Calu3 (cell line): ENCODE measurements at regions of chr7 and their contacts with region 1.

Region 1: GRCh38 chr7:90180011-90180585 is 25.8 kb downstream of the STEAP1 start:
- DNase-seq: no peak
- H3K4me3 Mint-ChIP-seq: no peak overlapping the region
- H3K27ac Mint-ChIP-seq: peak overlapping the region; percentile 95
- H3K4me1 Mint-ChIP-seq: peaks cover 18% of the 10 kb centered on the region
- H3K27me3 Mint-ChIP-seq: no peaks in the 10 kb centered on the region
- CTCF ChIP-seq: no peak

Region 2: GRCh38 chr7:89563597-89563996 is 616.5 kb before region 1 on chr7:
- CTCF ChIA-PET with region 1: no interaction called
- intact Hi-C with region 1: no loop called
- DNase-seq: no peak
- H3K4me3 Mint-ChIP-seq: no peak overlapping the region
- H3K27ac Mint-ChIP-seq: no peak overlapping the region
- H3K4me1 Mint-ChIP-seq: no peaks in the 10 kb centered on the region
- H3K27me3 Mint-ChIP-seq: no peaks in the 10 kb centered on the region
- CTCF ChIP-seq: no peak

Region 3: GRCh38 chr7:90236721-90237289 is 56.7 kb after region 1 on chr7:
- CTCF ChIA-PET with region 1: no interaction called
- intact Hi-C with region 1: loop called (anchors 2 kb)
- DNase-seq: no peak
- H3K4me3 Mint-ChIP-seq: peak overlapping the region; percentile 32
- H3K27ac Mint-ChIP-seq: peak overlapping the region; percentile 30
- H3K4me1 Mint-ChIP-seq: peaks cover 33% of the 10 kb centered on the region
- H3K27me3 Mint-ChIP-seq: no peaks in the 10 kb centered on the region
- CTCF ChIP-seq: no peak

Region 4: DNA sequence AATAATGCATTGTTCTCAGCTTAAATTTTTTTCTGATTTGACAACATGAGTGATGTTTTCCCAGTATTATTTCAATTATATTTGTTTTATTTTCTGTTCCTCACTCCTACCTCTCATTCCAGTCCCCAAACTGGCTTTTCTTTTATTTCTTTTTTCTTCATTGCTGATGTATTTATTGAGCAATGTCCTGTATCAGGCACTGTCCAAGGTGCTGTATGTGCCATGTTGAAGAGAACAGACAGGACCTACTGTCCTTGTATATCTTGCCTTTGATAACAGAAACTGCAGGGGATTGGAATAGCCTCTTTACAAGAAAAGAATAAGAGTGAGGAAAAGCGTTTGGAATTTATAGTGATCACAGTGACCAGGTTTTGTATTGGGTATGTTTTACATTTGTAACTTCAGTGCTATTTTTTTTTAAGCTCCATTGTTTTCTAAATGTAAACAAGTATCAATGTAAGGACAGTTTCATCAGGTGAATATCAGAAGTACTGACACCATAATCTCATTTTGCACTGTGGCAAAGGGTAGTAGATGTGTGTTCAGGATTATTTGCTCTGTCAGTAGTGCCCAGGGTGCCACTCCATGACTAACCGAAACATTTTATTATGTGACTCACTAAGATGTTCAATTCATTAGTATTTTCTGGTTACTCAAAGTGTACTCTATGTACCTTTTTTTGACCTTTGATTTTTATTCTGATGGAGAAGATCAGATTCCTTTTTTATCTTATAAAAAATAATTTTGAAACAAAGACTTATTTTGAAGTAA is 207.6 kb after region 1 on chr7:
- CTCF ChIA-PET with region 1: no interaction called
- intact Hi-C with region 1: no loop called
- DNase-seq: no peak
- H3K4me3 Mint-ChIP-seq: no peak overlapping the region
- H3K27ac Mint-ChIP-seq: no peak overlapping the region
- H3K4me1 Mint-ChIP-seq: no peaks in the 10 kb centered on the region
- H3K27me3 Mint-ChIP-seq: no peaks in the 10 kb centered on the region
- CTCF ChIP-seq: no peak